Gastrocnemius medialis (tissue), 4 donors: ENCODE measurements at regions of chr1 and their contacts with region 1.

Region 1: GRCh38 chr1:160428655-160429054 is 28.3 kb downstream of the VANGL2 start:
- DNase-seq: no peak
- ATAC-seq: peak in 1 of 2 donors; percentile 41
- H3K4me3 ChIP-seq: no peak overlapping the region
- H3K27ac ChIP-seq: no peak overlapping the region
- H3K4me1 ChIP-seq: no peaks in the 10 kb centered on the region
- H3K27me3 ChIP-seq: no peaks in the 10 kb centered on the region
- CTCF ChIP-seq: peak in 3 of 5 experiments; percentile 11 to 33 (median 17)
- POLR2A ChIP-seq: no peak

Region 2: DNA sequence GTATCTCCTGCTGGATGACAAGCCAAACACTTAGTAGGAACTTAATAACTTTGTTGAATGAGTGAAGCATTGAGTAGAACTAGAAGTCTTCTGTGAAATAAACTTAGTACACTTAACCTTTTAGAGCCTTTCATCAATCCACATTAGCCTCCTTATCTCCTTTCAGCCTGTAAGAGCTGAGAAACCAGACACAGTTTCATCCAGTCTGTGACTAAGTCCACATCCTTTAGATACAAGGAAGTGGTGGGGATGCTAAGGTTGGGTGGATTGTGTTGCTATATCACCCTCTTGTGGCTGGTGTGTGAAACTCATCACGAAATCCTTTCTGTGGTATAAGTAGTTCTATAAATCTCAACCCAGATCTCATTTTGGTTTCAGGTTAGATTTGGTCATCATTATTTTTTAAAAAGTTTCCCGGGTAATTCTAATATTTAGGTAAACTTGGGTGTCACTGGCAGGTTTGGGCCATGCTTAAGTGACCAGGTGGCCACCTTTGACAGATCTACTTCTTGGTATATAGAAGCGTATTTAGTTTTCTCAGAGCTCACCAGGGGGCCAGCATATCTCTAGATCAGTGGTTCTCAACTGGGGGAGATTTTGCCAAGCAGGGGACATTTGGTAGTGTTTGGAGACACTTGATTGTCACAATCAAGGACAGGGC is 178.5 kb after region 1 on chr1:
- in situ Hi-C with region 1: loop called in 2 of 4 experiments (anchors 10 kb)
- intact Hi-C with region 1: loop called (anchors 2 kb)
- DNase-seq: no peak
- ATAC-seq: no peak
- H3K4me3 ChIP-seq: no peak overlapping the region
- H3K27ac ChIP-seq: no peak overlapping the region
- H3K4me1 ChIP-seq: no peaks in the 10 kb centered on the region
- H3K27me3 ChIP-seq: no peaks in the 10 kb centered on the region
- CTCF ChIP-seq: peak in 3 of 5 experiments; percentile 18 to 45 (median 37)
- POLR2A ChIP-seq: no peak

Region 3: DNA sequence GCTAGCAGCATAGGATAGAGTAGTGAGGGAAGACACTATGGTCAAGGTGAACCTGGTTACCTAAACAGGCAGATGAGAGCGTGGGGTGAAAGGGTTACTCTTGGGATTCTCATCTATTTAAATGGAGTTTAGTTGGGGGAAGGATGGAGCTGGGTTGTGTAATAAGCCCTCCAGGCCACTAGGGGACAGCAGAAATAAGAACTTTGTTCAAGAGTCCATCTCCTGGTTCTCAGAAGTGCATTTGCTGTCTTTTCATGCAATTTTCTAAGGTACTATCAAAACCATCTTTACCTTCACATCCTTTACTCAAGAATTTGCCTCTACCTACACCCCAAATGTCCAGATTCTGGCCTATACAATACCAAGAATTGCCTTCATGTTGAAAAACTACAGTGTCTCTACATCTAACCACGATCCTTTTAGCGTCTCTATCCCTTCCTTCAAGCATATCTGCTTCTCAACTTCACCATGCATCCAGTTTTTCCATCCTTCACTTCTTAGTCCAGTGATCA is 190.2 kb after region 1 on chr1:
- in situ Hi-C with region 1: loop called in 2 of 4 experiments (anchors 10 kb)
- intact Hi-C with region 1: no loop called
- DNase-seq: no peak
- ATAC-seq: no peak
- H3K4me3 ChIP-seq: no peak overlapping the region
- H3K27ac ChIP-seq: no peak overlapping the region
- H3K4me1 ChIP-seq: no peaks in the 10 kb centered on the region
- H3K27me3 ChIP-seq: no peaks in the 10 kb centered on the region
- CTCF ChIP-seq: peak in 1 of 5 experiments; percentile 10
- POLR2A ChIP-seq: no peak